Spleen (tissue), 13 donors: ENCODE measurements at regions of chr9 and their contacts with region 1.

Region 1: GRCh38 chr9:96449845-96450612 is at the start of gene HABP4:
- DNase-seq: peak; percentile 96
- H3K4me3 ChIP-seq: peak within 1 kb of the TSS; percentile 61 to 91 (median 72)
- H3K27ac ChIP-seq: peak within 1 kb of the TSS in 7 of 8 donors; percentile 67 to 87 (median 76)
- H3K4me1 ChIP-seq: peaks cover 0 to 33% (median 20%) of the 10 kb centered on the region in 6 donors
- H3K27me3 ChIP-seq: peaks cover 0 to 25% (median 0%) of the 10 kb centered on the region in 7 donors
- CTCF ChIP-seq: peak in 5 of 11 experiments; percentile 16 to 37 (median 22)
- POLR2A ChIP-seq: no peak
- total RNA-seq, gene HABP4: 6.3 to 10.6 (median 7.9) TPM

Region 2: GRCh38 chr9:95793924-95794828 is 655.9 kb before region 1 on chr9:
- intact Hi-C with region 1: no loop called
- DNase-seq: no peak
- H3K4me3 ChIP-seq: no peak overlapping the region
- H3K27ac ChIP-seq: no peak overlapping the region
- H3K4me1 ChIP-seq: no peaks in the 10 kb centered on the region
- H3K27me3 ChIP-seq: no peaks in the 10 kb centered on the region
- CTCF ChIP-seq: no peak
- POLR2A ChIP-seq: no peak

Region 3: GRCh38 chr9:96418074-96418809 is 31.8 kb before region 1 on chr9 and contains the start of gene ZNF367:
- intact Hi-C with region 1: loop called (anchors 2 kb)
- DNase-seq: peak; percentile 98
- H3K4me3 ChIP-seq: peak within 1 kb of the TSS; percentile 71 to 95 (median 89)
- H3K27ac ChIP-seq: peak within 1 kb of the TSS; percentile 93 to 99 (median 98)
- H3K4me1 ChIP-seq: peaks cover 10 to 62% (median 50%) of the 10 kb centered on the region in 6 donors
- H3K27me3 ChIP-seq: no peaks in the 10 kb centered on the region
- CTCF ChIP-seq: peak in 2 of 11 experiments; percentile 20 to 31
- POLR2A ChIP-seq: no peak
- total RNA-seq, gene ZNF367: 1.2 to 3.7 (median 2.2) TPM

Region 4: DNA sequence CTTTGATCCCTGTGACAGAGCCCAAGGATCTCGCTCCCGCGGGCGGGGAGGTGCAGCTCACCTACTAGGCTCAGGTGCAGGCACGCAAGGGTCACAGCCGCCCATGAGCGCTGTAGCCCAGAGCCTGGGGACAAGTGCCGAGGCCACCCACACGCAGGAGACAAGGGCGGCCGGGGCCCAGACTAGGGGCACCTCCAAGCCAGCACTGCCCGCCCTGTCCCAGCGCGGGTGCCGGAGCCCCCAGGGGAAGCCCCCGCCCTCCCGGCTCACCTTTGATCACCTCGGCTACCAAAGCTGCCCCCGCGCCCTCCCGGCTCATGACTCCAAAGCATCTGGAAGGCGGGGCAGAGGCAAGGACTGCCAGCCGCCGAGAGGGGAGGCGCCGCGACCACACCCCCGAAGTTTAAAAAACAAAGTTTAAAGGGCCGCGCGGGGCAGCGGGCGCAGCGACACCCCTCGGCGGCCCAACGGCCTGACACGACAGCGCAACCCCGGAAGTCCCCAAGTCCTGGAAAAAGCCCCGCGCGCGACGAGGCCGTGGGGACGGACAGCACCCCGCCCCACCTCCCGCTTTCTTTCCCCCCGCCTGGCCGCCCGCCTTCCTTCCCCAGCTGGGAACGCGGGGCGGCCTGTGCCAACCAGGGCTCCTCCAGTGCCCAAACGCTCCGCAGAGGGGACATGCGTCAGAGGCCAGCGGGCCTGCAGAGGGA is 116.6 kb after region 1 on chr9:
- intact Hi-C with region 1: loop called (anchors 5 kb)
- DNase-seq: peak; percentile 95
- H3K4me3 ChIP-seq: peak overlapping the region; percentile 68 to 82 (median 70)
- H3K27ac ChIP-seq: peak overlapping the region; percentile 72 to 92 (median 86)
- H3K4me1 ChIP-seq: peaks cover 0 to 39% (median 26%) of the 10 kb centered on the region in 6 donors
- H3K27me3 ChIP-seq: no peaks in the 10 kb centered on the region
- CTCF ChIP-seq: peak; percentile 53 to 89 (median 75)
- POLR2A ChIP-seq: no peak